ENCODE measurements at regions of chrX and their contacts with region 1.

Region 1: DNA sequence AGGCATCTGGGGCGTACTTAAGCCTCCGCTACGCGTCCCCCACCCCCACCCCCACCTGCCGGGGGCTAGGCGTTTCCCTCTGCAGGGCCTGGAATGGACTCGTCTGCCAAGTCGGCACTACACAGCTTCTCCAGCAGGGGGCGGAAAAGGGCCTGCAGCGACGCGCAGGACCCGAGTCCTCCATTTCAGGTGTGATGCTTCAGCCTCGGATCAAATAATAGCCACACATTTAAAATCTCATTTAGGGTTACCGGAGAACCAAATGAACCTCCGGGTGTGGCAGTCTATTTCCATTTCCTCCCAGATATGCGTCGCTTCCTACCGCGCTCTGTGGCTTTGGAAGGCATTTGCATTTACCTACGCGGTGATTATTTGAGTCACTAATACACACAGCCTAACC is 2.9 kb downstream of the PAK3 start:
- DNase-seq: peak; percentile 77
- H3K4me3 Mint-ChIP-seq: peak overlapping the region; percentile 45
- H3K27ac Mint-ChIP-seq: no peak overlapping the region
- H3K4me1 Mint-ChIP-seq: peaks cover 22% of the 10 kb centered on the region
- H3K27me3 Mint-ChIP-seq: peaks cover 1% of the 10 kb centered on the region

Region 2: GRCh38 chrX:110863883-110864282 is 235.0 kb before region 1 on chrX:
- CTCF ChIA-PET with region 1: no interaction called
- POLR2A ChIA-PET with region 1: no interaction called
- intact Hi-C with region 1: no loop called
- DNase-seq: no peak
- H3K4me3 Mint-ChIP-seq: no peak overlapping the region
- H3K27ac Mint-ChIP-seq: no peak overlapping the region
- H3K4me1 Mint-ChIP-seq: no peaks in the 10 kb centered on the region
- H3K27me3 Mint-ChIP-seq: peaks cover 4% of the 10 kb centered on the region

Region 3: DNA sequence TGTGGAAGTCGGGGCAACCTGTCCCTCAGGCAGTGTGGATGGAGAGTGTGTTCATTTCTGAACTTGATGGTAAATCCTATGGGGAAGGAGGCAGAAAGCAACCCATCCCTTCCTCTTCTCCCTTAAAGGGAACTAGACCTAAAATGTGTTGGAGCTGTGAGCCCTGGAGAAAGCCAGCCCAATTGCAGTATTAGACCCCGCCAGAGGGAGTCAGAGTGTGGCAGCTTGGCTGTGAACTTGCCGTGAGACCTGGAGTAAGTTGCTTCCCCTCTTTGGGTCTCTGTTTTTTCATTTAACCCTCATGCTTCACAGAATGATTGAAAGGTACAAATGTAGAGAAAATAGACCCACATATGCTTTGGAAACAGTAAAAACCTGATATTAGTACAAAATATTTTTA is 111.6 kb before region 1 on chrX:
- CTCF ChIA-PET with region 1: interaction called, 14 read pairs
- POLR2A ChIA-PET with region 1: no interaction called
- intact Hi-C with region 1: loop called (anchors 1 kb)
- DNase-seq: no peak
- H3K4me3 Mint-ChIP-seq: no peak overlapping the region
- H3K27ac Mint-ChIP-seq: no peak overlapping the region
- H3K4me1 Mint-ChIP-seq: no peaks in the 10 kb centered on the region
- H3K27me3 Mint-ChIP-seq: peaks cover 2% of the 10 kb centered on the region

Region 4: DNA sequence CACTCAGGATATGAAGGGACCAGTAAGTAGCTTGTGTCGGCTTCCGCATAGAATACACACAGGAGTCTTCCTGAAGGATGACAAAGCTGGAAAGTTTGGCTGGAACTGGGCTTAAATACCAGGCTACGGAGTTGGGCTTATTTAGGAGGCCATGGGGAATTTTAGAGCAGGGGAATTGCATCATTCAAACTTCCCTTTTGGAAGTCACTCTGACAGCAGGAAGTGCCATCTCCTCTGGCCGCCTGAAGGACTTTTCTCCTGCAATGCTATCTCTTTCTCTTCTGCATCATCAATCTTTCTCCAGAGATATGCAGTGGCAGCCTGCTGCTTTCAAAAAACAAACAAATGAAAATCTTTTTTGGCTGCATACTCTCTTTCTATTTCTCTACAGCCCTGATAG is 51.3 kb before region 1 on chrX:
- CTCF ChIA-PET with region 1: no interaction called
- POLR2A ChIA-PET with region 1: no interaction called
- intact Hi-C with region 1: no loop called
- DNase-seq: no peak
- H3K4me3 Mint-ChIP-seq: no peak overlapping the region
- H3K27ac Mint-ChIP-seq: no peak overlapping the region
- H3K4me1 Mint-ChIP-seq: peaks cover 3% of the 10 kb centered on the region
- H3K27me3 Mint-ChIP-seq: no peaks in the 10 kb centered on the region

Region 5: GRCh38 chrX:111123606-111124179 is 24.8 kb after region 1 on chrX:
- CTCF ChIA-PET with region 1: interaction called, 5 read pairs
- POLR2A ChIA-PET with region 1: no interaction called
- intact Hi-C with region 1: loop called (anchors 1 kb)
- DNase-seq: no peak
- H3K4me3 Mint-ChIP-seq: peak overlapping the region; percentile 63
- H3K27ac Mint-ChIP-seq: peak overlapping the region; percentile 83
- H3K4me1 Mint-ChIP-seq: peaks cover 24% of the 10 kb centered on the region
- H3K27me3 Mint-ChIP-seq: no peaks in the 10 kb centered on the region

Region 6: DNA sequence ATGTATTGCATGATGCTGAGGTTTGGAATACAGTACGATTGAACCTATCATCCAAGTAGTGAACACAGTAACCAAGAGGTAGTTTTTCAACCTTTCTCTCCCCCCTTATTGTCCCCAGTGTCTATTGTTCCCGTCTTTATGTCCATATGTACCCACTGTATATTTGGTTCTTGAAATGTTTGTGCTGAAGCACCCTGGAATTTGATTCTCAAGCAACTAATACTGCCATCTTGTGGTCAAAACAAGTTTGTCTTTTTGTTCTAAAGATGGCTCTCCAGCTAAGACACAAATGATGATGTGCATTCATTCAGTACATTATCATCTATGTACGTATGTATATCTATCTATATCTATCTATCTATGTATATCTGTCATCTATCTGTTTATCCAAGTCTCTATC is 346.6 kb after region 1 on chrX:
- CTCF ChIA-PET with region 1: interaction called, 4 read pairs
- POLR2A ChIA-PET with region 1: no interaction called
- intact Hi-C with region 1: loop called (anchors 2 kb)
- DNase-seq: no peak
- H3K4me3 Mint-ChIP-seq: no peak overlapping the region
- H3K27ac Mint-ChIP-seq: no peak overlapping the region
- H3K4me1 Mint-ChIP-seq: no peaks in the 10 kb centered on the region
- H3K27me3 Mint-ChIP-seq: peaks cover 3% of the 10 kb centered on the region